ENCODE measurements at regions of chr17 and their contacts with region 1.

Region 1: GRCh38 chr17:42677008-42677857 is 439 bp upstream of the PLEKHH3 start:
- DNase-seq: peak; percentile 94
- H3K4me3 ChIP-seq: peak overlapping the region; percentile 94
- CTCF ChIP-seq: no peak

Region 2: GRCh38 chr17:42659079-42659931 is 17.9 kb before region 1 on chr17 and contains the start of gene TUBG2:
- CTCF ChIA-PET with region 1: interaction called, 31 read pairs
- POLR2A ChIA-PET with region 1: interaction called, 7 read pairs
- DNase-seq: no peak
- H3K4me3 ChIP-seq: peak within 1 kb of the TSS; percentile 67
- CTCF ChIP-seq: no peak

Region 3: GRCh38 chr17:42698736-42699414 is 21.6 kb after region 1 on chr17:
- CTCF ChIA-PET with region 1: interaction called, 10 read pairs
- POLR2A ChIA-PET with region 1: no interaction called
- DNase-seq: no peak
- H3K4me3 ChIP-seq: no peak overlapping the region
- CTCF ChIP-seq: no peak

Region 4: GRCh38 chr17:43183921-43184320 is 506.7 kb after region 1 on chr17:
- CTCF ChIA-PET with region 1: no interaction called
- POLR2A ChIA-PET with region 1: no interaction called
- DNase-seq: no peak
- H3K4me3 ChIP-seq: no peak overlapping the region
- CTCF ChIP-seq: no peak

Measured in AG04449 (cell line).